PC-3 (cell line): ENCODE measurements at regions of chr14 and their contacts with region 1.

Region 1: DNA sequence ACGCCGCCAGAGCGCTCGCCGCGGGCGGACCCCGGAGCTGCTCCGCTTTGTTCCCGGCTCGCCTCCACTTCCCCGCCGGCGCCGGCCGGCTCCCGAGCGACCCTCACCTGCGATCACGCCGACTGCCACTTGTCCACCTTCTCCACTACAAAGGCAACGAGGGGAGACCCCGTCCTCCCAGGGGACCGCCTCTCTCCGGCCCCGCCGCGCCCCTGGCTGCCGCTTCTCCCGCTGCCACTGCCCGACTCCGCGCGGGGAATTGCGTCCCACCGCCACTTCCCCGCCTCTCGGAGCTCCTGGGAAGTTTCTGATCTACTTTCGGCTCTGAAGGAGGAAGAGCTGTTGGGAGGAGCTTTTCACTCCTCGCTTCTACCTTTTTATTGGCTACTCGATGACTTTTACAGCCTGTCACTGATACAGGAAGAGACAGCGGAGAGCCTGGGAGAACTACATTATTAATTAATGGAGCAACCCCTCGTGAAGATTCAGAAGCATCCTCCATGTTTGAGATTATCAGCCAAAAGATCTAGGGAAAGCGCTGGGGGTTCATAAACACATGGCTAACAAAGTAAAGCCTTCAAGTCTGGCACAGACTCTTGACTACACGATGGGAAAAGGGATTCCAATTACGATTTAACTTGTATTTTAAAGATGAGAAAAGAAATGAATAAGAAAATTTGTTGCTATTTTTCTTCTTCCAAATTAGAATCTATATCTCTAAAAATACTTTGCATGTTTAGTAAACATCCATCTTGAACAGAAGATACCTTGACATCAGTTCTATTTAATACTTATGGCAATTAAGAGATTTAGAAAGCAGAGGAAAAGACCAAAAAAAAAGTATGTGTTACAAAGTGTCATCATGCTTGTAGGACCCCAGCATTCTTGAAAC is at the start of gene BAZ1A:
- DNase-seq: peak; percentile 93
- ATAC-seq: peak; percentile 69
- H3K4me3 ChIP-seq: peak within 1 kb of the TSS; percentile 71
- H3K27ac ChIP-seq: peak within 1 kb of the TSS; percentile 94
- H3K4me1 ChIP-seq: peaks cover 19% of the 10 kb centered on the region
- H3K27me3 ChIP-seq: no peaks in the 10 kb centered on the region
- CTCF ChIP-seq: no peak
- total RNA-seq, gene BAZ1A: 24.7 and 30.6 TPM in 2 replicates

Region 2: DNA sequence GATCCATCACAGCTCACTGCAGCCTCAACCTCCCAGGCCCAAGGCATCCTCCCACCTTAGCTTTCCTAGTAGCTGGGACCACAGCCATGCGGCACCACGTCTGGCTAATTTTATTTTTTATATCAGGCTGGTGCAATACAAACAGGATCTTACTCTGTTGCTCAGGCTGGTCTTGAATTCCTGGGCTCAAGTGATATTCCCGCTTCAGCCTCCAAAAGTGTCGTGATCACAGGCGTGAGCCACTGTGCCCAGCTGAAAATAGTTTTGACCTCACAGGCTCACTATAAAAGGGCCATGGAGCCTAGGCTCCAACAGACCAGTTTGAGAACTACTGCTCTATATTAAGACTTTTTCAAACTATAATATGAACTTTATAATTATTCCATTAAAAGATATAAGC is 282.7 kb before region 1 on chr14:
- CTCF ChIA-PET with region 1: interaction called, 13 read pairs
- POLR2A ChIA-PET with region 1: interaction called, 4 read pairs
- intact Hi-C with region 1: no loop called
- DNase-seq: no peak
- ATAC-seq: no peak
- H3K4me3 ChIP-seq: no peak overlapping the region
- H3K27ac ChIP-seq: no peak overlapping the region
- H3K4me1 ChIP-seq: no peaks in the 10 kb centered on the region
- H3K27me3 ChIP-seq: no peaks in the 10 kb centered on the region
- CTCF ChIP-seq: no peak

Region 3: DNA sequence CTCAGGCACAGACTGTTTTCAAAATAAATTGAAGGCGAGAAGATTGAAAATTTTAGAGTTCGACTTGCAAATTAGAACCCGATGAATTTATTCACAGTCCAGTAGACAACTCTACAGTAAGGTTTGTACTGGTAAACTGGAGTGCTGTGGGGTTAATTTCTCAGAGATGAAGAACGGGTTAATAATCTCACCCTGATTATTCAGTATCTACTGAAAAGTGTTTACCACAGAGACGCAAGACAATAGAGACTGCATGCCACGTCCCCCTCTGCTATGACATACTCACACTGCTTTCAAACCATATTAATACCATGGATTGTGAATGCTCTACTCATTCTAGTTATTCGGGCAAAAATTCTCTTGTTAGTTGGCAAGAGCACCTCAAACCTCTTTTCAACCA is 197.0 kb before region 1 on chr14:
- CTCF ChIA-PET with region 1: no interaction called
- POLR2A ChIA-PET with region 1: interaction called, 5 read pairs
- intact Hi-C with region 1: loop called (anchors 5 kb)
- DNase-seq: no peak
- ATAC-seq: peak; percentile 16
- H3K4me3 ChIP-seq: no peak overlapping the region
- H3K27ac ChIP-seq: peak overlapping the region; percentile 58
- H3K4me1 ChIP-seq: peaks cover 21% of the 10 kb centered on the region
- H3K27me3 ChIP-seq: no peaks in the 10 kb centered on the region
- CTCF ChIP-seq: no peak

Region 4: GRCh38 chr14:34895277-34895676 is 20.0 kb after region 1 on chr14:
- CTCF ChIA-PET with region 1: no interaction called
- POLR2A ChIA-PET with region 1: no interaction called
- intact Hi-C with region 1: no loop called
- DNase-seq: no peak
- ATAC-seq: no peak
- H3K4me3 ChIP-seq: no peak overlapping the region
- H3K27ac ChIP-seq: no peak overlapping the region
- H3K4me1 ChIP-seq: no peaks in the 10 kb centered on the region
- H3K27me3 ChIP-seq: no peaks in the 10 kb centered on the region
- CTCF ChIP-seq: no peak

Region 5: GRCh38 chr14:34912178-34912577 is 36.9 kb after region 1 on chr14:
- CTCF ChIA-PET with region 1: no interaction called
- POLR2A ChIA-PET with region 1: no interaction called
- intact Hi-C with region 1: loop called (anchors 1 kb)
- DNase-seq: no peak
- ATAC-seq: peak; percentile 23
- H3K4me3 ChIP-seq: no peak overlapping the region
- H3K27ac ChIP-seq: no peak overlapping the region
- H3K4me1 ChIP-seq: peaks cover 5% of the 10 kb centered on the region
- H3K27me3 ChIP-seq: no peaks in the 10 kb centered on the region
- CTCF ChIP-seq: peak; percentile 36; the same call in 1 of the 2 replicates

Region 6: GRCh38 chr14:34920339-34920738 is 45.1 kb after region 1 on chr14:
- CTCF ChIA-PET with region 1: interaction called, 16 read pairs
- POLR2A ChIA-PET with region 1: no interaction called
- intact Hi-C with region 1: no loop called
- DNase-seq: peak; percentile 10
- ATAC-seq: peak; percentile 62; the same call in 1 of the 2 replicates
- H3K4me3 ChIP-seq: no peak overlapping the region
- H3K27ac ChIP-seq: no peak overlapping the region
- H3K4me1 ChIP-seq: no peaks in the 10 kb centered on the region
- H3K27me3 ChIP-seq: no peaks in the 10 kb centered on the region
- CTCF ChIP-seq: no peak

Region 7: GRCh38 chr14:34982417-34983147 is 107.3 kb after region 1 on chr14 and contains the start of gene SRP54:
- CTCF ChIA-PET with region 1: interaction called, 3 read pairs
- POLR2A ChIA-PET with region 1: interaction called, 15 read pairs
- intact Hi-C with region 1: loop called (anchors 1 kb)
- DNase-seq: peak; percentile 97
- ATAC-seq: peak; percentile 75
- H3K4me3 ChIP-seq: peak within 1 kb of the TSS; percentile 78
- H3K27ac ChIP-seq: peak within 1 kb of the TSS; percentile 93
- H3K4me1 ChIP-seq: peaks cover 19% of the 10 kb centered on the region
- H3K27me3 ChIP-seq: no peaks in the 10 kb centered on the region
- CTCF ChIP-seq: 0 out of 2 replicates have a peak, but pooled peaks have one; percentile 6
- total RNA-seq, gene SRP54: 49.3 and 75.5 TPM in 2 replicates